Motor neuron (in vitro differentiated cells): ENCODE measurements at regions of chr10 and their contacts with region 1.

Region 1: DNA sequence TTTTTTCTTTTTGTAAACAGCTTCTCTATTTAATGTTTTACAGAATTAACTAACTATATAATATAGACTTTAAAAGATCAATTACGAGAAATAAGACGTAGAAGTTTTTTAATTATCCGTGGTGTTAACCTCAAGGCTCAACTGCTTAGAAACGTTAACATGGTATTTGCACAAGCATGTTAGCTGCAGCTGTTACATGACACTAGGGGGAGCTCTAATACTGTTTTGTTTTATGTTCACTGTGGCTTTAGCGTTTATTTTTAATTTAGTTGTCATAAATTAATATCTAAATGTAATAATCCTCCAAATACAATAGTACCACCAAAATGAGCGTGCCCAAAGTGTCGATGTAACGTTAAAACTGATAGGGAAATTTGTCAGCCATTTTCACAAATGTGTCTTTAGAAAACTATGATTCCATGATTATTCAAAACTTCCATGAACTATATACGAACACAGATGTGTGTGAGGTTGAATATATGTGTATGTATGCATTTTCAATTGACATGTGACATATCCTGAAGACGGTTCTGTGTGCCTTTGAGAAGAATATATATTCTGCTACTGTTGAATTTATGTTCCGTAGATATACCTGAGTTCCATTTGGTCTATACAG is 828.8 kb upstream of the MBL2 start:
- ATAC-seq: peak in 5 of 8 experiments; percentile 8 to 67 (median 47)
- H3K4me3 ChIP-seq: no peak overlapping the region
- H3K27ac ChIP-seq: no peak overlapping the region
- H3K4me1 ChIP-seq: peaks cover 0 to 4% of the 10 kb centered on the region in 2 donors

Region 2: GRCh38 chr10:53209944-53210611 is 391.3 kb before region 1 on chr10:
- in situ Hi-C with region 1: loop called in 1 of 9 experiments (anchors 25 kb)
- ATAC-seq: peak in 4 of 8 experiments; percentile 47 to 79 (median 58)
- H3K4me3 ChIP-seq: no peak overlapping the region
- H3K27ac ChIP-seq: no peak overlapping the region
- H3K4me1 ChIP-seq: no peaks in the 10 kb centered on the region

Region 3: DNA sequence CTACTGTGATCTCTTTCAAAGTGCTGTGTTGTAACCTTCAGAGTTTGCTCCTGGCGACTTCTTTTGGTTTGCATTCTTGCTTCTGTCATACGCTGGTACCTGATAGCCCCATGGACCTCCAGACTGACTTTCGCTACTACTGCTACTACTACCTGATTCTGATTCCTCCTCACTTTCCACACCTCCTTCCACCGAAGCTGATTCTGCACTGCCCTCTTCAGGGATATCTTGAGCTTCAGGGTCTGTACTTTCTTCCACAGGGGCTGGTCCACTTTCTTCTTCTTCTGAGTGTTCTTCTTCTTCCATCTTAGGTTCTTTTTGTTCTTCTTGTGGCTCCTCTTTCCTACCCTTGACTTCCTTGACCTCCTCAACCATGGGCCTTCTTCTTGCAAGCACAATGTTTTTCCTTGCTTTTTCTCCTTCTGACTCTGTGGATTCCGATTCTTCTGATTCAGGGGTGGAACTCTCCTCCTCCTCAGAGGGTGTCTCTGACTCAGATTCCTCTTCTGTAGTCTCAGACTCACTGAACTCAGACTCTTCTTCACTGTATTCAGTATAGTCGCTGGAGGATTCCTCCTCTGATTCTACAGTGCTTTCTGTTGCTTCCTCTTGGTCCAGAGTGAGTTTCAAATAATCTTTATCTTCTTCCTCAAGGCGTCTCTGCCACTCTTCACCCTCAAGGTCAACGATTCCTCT is 207.5 kb after region 1 on chr10:
- in situ Hi-C with region 1: loop called in 3 of 9 experiments (anchors 25 kb)
- ATAC-seq: peak in 3 of 8 experiments; percentile 80 to 94 (median 81)
- H3K4me3 ChIP-seq: no peak overlapping the region
- H3K27ac ChIP-seq: no peak overlapping the region
- H3K4me1 ChIP-seq: no peaks in the 10 kb centered on the region